CD8-positive, alpha-beta T cell (primary cell): ENCODE measurements at regions of chr14 and their contacts with region 1.

Region 1: GRCh38 chr14:20970983-20971704 is 15.9 kb downstream of the RNASE2 start:
- DNase-seq: peak; percentile 48 to 87 (median 75)
- ATAC-seq: peak; percentile 91
- H3K4me3 ChIP-seq: peak overlapping the region; percentile 80 to 85
- H3K4me3 Mint-ChIP-seq: peak overlapping the region; percentile 92
- H3K27ac ChIP-seq: no peak overlapping the region
- H3K27ac Mint-ChIP-seq: no peak overlapping the region
- H3K4me1 ChIP-seq: peaks cover 11% of the 10 kb centered on the region
- H3K4me1 Mint-ChIP-seq: peaks cover 10% of the 10 kb centered on the region
- H3K27me3 ChIP-seq: peaks cover 0 to 3% of the 10 kb centered on the region in 2 experiments
- H3K27me3 Mint-ChIP-seq: peaks cover 24% of the 10 kb centered on the region
- CTCF ChIP-seq: peak; percentile 92

Region 2: DNA sequence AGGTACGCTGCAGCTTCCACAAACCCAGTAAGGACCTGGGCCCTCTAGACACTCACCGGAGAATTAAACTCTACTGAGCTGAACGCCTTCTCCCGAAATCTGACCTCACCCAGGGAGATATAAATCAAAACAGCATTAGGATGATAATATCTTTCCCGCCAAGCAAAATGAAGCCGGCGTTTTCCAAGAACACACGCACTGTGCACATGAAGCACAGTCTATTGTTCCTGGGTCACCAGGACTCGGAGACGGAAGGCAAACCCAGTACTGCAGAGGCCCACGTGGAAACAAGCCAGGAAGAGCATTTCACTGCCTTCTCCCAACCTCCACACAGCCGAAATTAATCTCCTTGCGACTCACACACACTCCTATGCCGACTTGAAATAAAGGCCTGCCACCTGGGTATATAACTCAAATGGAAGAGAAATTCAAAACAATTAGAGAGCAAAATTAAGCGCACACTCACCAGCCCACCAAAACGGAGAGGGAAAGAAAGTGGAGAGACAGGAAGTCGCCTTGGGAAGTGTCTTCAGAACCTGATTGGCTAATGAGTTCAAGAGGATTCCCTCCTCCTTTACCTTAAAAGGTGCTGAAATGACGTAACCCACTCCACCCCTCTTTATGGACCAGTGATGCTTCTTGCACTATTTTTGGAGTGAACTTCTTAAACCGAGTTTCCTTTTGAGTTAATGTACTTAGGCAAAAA is 638.2 kb before region 1 on chr14 and contains the start of gene CCNB1IP1:
- CTCF ChIA-PET with region 1: no interaction called
- POLR2A ChIA-PET with region 1: no interaction called
- intact Hi-C with region 1: loop called in 1 of 2 experiments (anchors 10 kb)
- DNase-seq: peak in 8 of 9 experiments; percentile 20 to 91 (median 50)
- ATAC-seq: peak; percentile 98
- H3K4me3 ChIP-seq: peak within 1 kb of the TSS; percentile 56 to 72
- H3K4me3 Mint-ChIP-seq: peak within 1 kb of the TSS; percentile 93
- H3K27ac ChIP-seq: peak within 1 kb of the TSS; percentile 49 to 73
- H3K27ac Mint-ChIP-seq: peak within 1 kb of the TSS; percentile 88
- H3K4me1 ChIP-seq: peaks cover 7% of the 10 kb centered on the region
- H3K4me1 Mint-ChIP-seq: peaks cover 30% of the 10 kb centered on the region
- H3K27me3 ChIP-seq: no peaks in the 10 kb centered on the region
- H3K27me3 Mint-ChIP-seq: no peaks in the 10 kb centered on the region
- CTCF ChIP-seq: no peak
- total RNA-seq, gene CCNB1IP1: 26.9 to 28.0 TPM

Region 3: DNA sequence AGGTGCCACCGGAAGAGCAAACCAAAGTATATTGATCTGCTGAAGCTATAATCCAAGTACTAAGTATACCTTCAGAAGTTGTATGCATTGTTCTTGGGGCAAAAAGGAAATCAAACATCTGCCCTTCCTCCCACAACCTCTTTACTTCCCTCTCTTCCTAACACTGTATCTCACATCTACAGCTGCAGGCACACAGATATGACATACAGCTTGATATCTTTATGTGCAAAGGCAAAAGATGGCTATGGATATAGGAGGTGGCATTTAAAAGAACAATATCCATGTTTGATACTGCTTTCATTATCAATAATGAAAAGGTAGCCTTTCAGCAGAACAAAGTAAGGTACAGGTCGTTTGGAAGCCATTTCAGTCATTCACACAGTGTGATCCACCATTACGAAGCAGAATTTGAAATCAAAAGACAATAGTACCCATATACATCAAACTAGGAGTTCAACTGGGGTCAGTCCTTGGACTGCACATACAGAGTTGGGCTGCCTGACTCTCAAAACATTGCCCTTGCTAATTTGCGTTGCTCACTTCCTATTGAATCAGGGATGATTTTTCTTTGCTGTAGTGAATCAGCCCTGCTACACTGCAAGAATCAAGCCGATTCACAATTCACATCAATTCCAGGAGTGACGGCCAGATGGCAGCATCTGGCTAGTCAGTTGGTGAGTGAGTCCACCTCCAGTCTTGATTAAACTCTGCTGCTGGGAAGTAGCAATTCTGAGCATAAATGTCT is 273.7 kb before region 1 on chr14:
- CTCF ChIA-PET with region 1: interaction called, 7 read pairs
- POLR2A ChIA-PET with region 1: no interaction called
- intact Hi-C with region 1: loop called (anchors 1 kb)
- DNase-seq: peak; percentile 44 to 76 (median 60)
- ATAC-seq: peak; percentile 72
- H3K4me3 ChIP-seq: no peak overlapping the region
- H3K4me3 Mint-ChIP-seq: no peak overlapping the region
- H3K27ac ChIP-seq: no peak overlapping the region
- H3K27ac Mint-ChIP-seq: no peak overlapping the region
- H3K4me1 ChIP-seq: no peaks in the 10 kb centered on the region
- H3K4me1 Mint-ChIP-seq: no peaks in the 10 kb centered on the region
- H3K27me3 ChIP-seq: no peaks in the 10 kb centered on the region
- H3K27me3 Mint-ChIP-seq: no peaks in the 10 kb centered on the region
- CTCF ChIP-seq: peak; percentile 75

Region 4: GRCh38 chr14:20873370-20874177 is 97.6 kb before region 1 on chr14:
- CTCF ChIA-PET with region 1: interaction called, 7 read pairs
- POLR2A ChIA-PET with region 1: interaction called, 3 read pairs
- intact Hi-C with region 1: loop called in 1 of 2 experiments (anchors 1 kb)
- DNase-seq: peak; percentile 47 to 86 (median 76)
- ATAC-seq: peak; percentile 74
- H3K4me3 ChIP-seq: no peak overlapping the region
- H3K4me3 Mint-ChIP-seq: no peak overlapping the region
- H3K27ac ChIP-seq: no peak overlapping the region
- H3K27ac Mint-ChIP-seq: no peak overlapping the region
- H3K4me1 ChIP-seq: peaks cover 10% of the 10 kb centered on the region
- H3K4me1 Mint-ChIP-seq: peaks cover 13% of the 10 kb centered on the region
- H3K27me3 ChIP-seq: no peaks in the 10 kb centered on the region
- H3K27me3 Mint-ChIP-seq: peaks cover 12% of the 10 kb centered on the region
- CTCF ChIP-seq: peak; percentile 82

Region 5: GRCh38 chr14:20982646-20983369 is 11.7 kb after region 1 on chr14:
- CTCF ChIA-PET with region 1: interaction called, 37 read pairs
- POLR2A ChIA-PET with region 1: no interaction called
- intact Hi-C with region 1: no loop called
- DNase-seq: no peak
- ATAC-seq: no peak
- H3K4me3 ChIP-seq: no peak overlapping the region
- H3K4me3 Mint-ChIP-seq: no peak overlapping the region
- H3K27ac ChIP-seq: no peak overlapping the region
- H3K27ac Mint-ChIP-seq: no peak overlapping the region
- H3K4me1 ChIP-seq: no peaks in the 10 kb centered on the region
- H3K4me1 Mint-ChIP-seq: no peaks in the 10 kb centered on the region
- H3K27me3 ChIP-seq: no peaks in the 10 kb centered on the region
- H3K27me3 Mint-ChIP-seq: peaks cover 8% of the 10 kb centered on the region
- CTCF ChIP-seq: no peak

Region 6: DNA sequence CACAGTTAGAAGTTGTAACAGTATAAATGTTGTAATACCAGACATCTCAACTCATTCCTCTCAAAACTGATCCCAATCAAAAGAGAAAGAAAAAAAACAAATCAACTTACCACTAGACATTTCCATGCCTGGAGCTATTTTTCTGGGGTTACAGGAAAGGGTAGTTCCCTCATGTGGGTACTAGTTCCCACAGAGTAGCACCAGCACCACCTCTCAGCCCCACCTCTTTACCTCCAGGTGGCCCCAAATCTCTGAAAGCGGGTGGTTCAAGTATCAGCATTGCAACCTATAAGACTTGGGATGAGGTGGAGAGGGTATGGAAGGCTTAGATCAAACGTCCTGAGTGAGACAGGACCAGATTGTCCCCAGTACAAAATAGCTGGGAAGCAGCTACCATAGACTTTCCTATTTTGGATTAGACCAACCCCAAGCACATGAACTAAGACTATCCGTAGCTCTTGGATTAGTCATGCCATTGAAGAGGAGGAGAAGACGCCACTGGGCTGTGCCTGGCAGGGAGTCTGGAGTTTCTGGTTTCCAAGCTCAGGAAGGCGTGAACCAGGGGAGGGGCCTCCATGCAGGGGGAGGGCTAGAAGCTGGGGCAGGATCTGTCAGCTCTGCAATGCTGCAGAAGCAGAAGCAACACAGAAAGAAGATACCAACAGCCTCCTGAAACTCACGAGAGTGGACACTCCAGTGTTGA is 27.7 kb after region 1 on chr14 and contains the start of gene SLC39A2:
- CTCF ChIA-PET with region 1: interaction called, 15 read pairs
- POLR2A ChIA-PET with region 1: no interaction called
- intact Hi-C with region 1: no loop called
- DNase-seq: no peak
- ATAC-seq: no peak
- H3K4me3 ChIP-seq: no peak within 1 kb of the TSS
- H3K4me3 Mint-ChIP-seq: no peak within 1 kb of the TSS
- H3K27ac ChIP-seq: peak within 1 kb of the TSS in 1 of 2 experiments; percentile 13
- H3K27ac Mint-ChIP-seq: peak within 1 kb of the TSS; percentile 12
- H3K4me1 ChIP-seq: peaks cover 8% of the 10 kb centered on the region
- H3K4me1 Mint-ChIP-seq: peaks cover 22% of the 10 kb centered on the region
- H3K27me3 ChIP-seq: no peaks in the 10 kb centered on the region
- H3K27me3 Mint-ChIP-seq: no peaks in the 10 kb centered on the region
- CTCF ChIP-seq: no peak
- total RNA-seq, gene SLC39A2: 0.33 to 0.62 TPM